ENCODE measurements at regions of chr7 and their contacts with region 1.

Region 1: DNA sequence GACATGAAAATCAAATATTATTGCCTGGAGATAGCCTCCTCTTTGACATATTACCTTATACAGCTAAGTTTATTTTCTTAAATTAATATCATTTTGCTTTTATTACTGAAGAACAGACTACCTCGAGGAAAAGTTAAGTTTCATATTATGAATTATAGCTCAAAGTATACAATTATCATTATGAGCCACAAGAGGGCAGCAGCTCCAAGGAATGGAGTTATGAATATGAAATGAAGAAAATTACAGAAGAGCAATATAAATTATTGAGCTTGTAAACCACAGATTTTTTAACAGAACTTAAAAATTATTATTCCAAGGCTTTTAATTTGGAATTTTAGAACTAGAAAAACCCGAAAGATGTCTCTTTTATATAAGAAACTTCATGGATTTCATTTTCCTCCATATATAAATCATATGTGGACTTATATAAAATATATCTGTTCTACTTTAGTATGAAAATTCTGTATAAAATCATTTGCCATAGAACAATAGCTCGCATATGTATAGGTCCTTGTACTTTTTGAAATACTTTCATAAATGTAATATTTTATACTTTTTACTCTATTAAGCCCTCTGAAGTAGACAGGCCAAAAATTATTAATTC is 40.1 kb downstream of the IQUB start:
- DNase-seq: peak; percentile 41
- ATAC-seq: no peak
- H3K4me3 Mint-ChIP-seq: no peak overlapping the region
- H3K27ac Mint-ChIP-seq: no peak overlapping the region
- H3K4me1 Mint-ChIP-seq: no peaks in the 10 kb centered on the region
- H3K27me3 Mint-ChIP-seq: peaks cover 10% of the 10 kb centered on the region

Region 2: DNA sequence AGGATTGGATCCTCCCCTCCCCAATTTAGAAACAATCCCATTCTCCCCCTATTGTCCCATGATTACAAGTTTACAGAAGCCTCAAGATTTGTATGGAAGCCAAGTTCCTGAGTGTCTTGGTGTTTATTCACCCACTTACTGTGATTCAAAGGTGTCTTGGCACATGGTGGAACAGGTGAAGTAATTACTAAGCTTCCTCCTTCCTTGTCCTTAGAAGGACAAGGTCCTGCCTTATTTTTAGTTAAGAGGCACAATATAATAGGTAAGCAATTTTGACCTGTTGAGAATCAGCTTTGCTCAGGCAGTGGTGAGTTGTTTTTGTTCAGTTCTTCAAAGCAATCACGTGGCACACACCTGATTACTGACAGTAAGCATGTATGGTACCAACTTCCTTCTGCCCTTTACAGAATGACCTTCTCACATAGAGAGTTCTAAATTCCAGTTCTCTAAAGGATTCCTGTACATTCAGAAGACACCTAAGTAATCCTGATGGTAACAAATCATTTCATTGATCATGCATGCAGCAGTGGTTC is 233.8 kb before region 1 on chr7:
- CTCF ChIA-PET with region 1: no interaction called
- POLR2A ChIA-PET with region 1: no interaction called
- intact Hi-C with region 1: no loop called
- DNase-seq: no peak
- ATAC-seq: no peak
- H3K4me3 Mint-ChIP-seq: no peak overlapping the region
- H3K27ac Mint-ChIP-seq: no peak overlapping the region
- H3K4me1 Mint-ChIP-seq: no peaks in the 10 kb centered on the region
- H3K27me3 Mint-ChIP-seq: no peaks in the 10 kb centered on the region

Region 3: GRCh38 chr7:123534383-123535260 is 40.3 kb after region 1 on chr7 and contains the start of gene IQUB:
- CTCF ChIA-PET with region 1: interaction called, 11 read pairs
- POLR2A ChIA-PET with region 1: no interaction called
- intact Hi-C with region 1: loop called (anchors 1 kb)
- DNase-seq: peak; percentile 99
- ATAC-seq: peak; percentile 88
- H3K4me3 Mint-ChIP-seq: peak within 1 kb of the TSS; percentile 87
- H3K27ac Mint-ChIP-seq: peak within 1 kb of the TSS; percentile 90
- H3K4me1 Mint-ChIP-seq: peaks cover 27% of the 10 kb centered on the region
- H3K27me3 Mint-ChIP-seq: peaks cover 16% of the 10 kb centered on the region
- total RNA-seq, gene IQUB: 0.05 TPM in 1 of 2 experiments, not detected in the other

Region 4: GRCh38 chr7:123624527-123625183 is 130.4 kb after region 1 on chr7:
- CTCF ChIA-PET with region 1: interaction called, 16 read pairs
- POLR2A ChIA-PET with region 1: no interaction called
- intact Hi-C with region 1: loop called in 1 of 2 experiments (anchors 10 kb)
- DNase-seq: peak; percentile 85
- ATAC-seq: peak; percentile 65
- H3K4me3 Mint-ChIP-seq: no peak overlapping the region
- H3K27ac Mint-ChIP-seq: no peak overlapping the region
- H3K4me1 Mint-ChIP-seq: no peaks in the 10 kb centered on the region
- H3K27me3 Mint-ChIP-seq: peaks cover 5% of the 10 kb centered on the region

Region 5: DNA sequence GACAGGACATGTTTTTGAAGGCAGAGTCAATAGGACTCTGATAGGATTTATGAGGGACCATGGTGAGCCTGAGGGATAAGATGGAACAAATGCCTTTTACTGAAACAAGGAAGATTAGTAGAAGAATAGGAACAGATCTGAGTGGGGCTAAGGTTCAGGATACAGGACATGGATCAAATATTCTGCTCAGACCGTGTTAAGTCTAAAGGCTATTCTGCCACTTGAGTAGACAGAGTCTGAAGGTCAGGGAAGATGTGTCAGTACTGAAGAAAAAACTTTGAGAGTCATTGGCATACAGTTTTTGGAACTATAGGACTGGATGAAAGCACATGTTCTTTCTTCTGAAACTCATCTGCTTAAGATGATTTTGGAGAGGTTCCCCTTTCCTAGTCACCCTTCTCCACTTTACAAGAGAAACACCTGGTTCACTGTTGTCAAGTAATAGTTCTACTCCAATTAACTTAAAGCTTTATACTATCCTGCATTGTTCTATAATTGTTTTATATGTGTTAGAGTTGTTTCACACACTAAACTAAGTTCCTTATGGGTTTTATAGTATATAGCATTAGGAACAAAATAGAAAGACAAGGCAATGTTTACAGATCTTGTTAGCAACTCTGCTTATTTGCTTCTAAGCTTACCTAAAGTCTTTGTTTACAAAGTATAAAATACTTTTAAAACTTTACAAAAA is 211.1 kb after region 1 on chr7:
- CTCF ChIA-PET with region 1: interaction called, 3 read pairs
- POLR2A ChIA-PET with region 1: no interaction called
- intact Hi-C with region 1: loop called (anchors 2 to 5 kb)
- DNase-seq: no peak
- ATAC-seq: no peak
- H3K4me3 Mint-ChIP-seq: no peak overlapping the region
- H3K27ac Mint-ChIP-seq: no peak overlapping the region
- H3K4me1 Mint-ChIP-seq: peaks cover 2% of the 10 kb centered on the region
- H3K27me3 Mint-ChIP-seq: no peaks in the 10 kb centered on the region

Region 6: DNA sequence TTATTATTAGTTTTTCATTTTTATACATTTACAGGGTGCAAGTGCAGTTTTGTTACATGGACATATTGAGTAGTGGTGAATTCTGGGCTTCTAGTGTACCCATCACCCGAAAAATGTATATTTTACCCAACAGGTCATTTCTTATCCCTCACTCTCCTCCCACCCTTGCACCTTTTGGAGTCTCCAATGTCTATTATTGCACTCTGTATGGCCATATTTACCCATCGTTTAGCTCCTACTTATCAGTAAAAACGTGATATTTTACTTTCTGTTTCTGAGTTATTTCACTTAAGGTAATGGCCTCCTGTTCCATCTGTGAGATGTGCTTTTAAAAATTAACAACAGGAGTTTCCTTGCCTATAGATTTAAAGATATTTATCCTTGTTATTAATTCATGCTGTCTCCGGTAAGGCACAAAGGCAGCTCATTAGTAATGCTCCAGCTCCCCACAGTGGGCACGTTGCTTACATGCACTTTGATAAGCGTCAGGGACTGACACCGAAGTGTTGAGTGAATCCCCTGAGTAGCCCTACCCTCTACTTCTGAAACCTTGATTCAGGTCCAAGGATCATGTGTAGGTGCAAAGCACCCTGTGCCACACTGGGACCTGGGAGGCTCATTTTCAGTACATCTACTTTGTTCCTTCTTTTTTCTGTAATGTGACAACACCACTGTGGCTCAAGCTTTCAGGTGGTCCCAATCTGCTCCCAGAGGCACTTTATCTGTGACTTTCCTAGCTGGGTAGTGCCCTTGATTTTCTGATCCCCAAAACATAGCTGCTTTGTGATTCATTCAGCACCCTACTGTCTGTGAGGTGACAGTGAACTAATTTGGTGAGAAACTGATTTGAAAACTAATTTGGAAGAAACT is 377.9 kb after region 1 on chr7:
- CTCF ChIA-PET with region 1: interaction called, 18 read pairs
- POLR2A ChIA-PET with region 1: no interaction called
- intact Hi-C with region 1: loop called in 1 of 2 experiments (anchors 2 kb)
- DNase-seq: peak; percentile 65
- ATAC-seq: peak; percentile 82
- H3K4me3 Mint-ChIP-seq: no peak overlapping the region
- H3K27ac Mint-ChIP-seq: no peak overlapping the region
- H3K4me1 Mint-ChIP-seq: peaks cover 3% of the 10 kb centered on the region
- H3K27me3 Mint-ChIP-seq: peaks cover 4% of the 10 kb centered on the region